Posterior vena cava (tissue), 2 donors: ENCODE measurements at regions of chr10 and their contacts with region 1.

Region 1: GRCh38 chr10:112369495-112370423 is 4.2 kb upstream of the ACSL5 start:
- DNase-seq: no peak

Region 2: DNA sequence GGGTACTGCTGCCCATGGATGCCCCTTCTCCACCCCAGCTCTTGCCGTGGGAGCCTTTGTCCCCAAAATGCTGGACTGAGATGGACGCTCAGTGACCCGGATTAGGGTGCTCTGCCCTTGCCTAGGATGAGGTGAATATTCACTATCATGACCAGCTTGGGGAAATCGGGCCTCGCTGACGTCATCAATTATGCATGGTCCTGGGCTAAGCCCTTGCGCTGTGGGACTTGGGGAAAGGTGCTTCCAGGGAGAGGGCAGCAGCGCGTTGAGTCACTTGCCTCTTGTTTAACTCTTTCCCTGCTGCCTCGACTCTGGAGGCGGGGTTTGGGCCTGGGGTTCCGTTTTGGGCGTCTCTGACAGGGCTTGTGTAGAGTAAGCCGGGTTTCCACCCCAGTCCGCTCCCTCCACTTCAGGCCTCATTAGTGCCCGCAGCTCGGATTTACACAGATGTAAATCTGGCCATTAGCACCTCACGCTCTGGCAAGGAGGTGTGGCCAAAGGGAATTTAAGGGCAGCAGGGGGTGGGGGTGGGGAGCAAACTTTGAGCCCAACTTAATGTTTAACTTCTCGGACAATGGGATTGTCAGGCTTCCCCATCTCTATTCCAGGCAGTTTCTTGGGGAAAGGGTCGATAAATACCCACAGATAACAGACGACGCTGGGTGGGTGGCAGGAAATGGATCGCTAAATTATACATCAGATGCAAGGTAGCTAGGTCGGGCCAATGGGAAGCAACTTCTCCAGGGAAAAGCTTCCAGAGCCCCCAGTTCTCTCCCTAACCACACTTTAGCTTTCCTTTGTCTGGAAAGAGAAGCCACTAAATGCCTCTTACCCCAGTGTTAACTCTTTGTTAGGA is 529.0 kb after region 1 on chr10:
- intact Hi-C with region 1: loop called in 1 of 2 experiments (anchors 5 kb)
- DNase-seq: no peak

Region 3: DNA sequence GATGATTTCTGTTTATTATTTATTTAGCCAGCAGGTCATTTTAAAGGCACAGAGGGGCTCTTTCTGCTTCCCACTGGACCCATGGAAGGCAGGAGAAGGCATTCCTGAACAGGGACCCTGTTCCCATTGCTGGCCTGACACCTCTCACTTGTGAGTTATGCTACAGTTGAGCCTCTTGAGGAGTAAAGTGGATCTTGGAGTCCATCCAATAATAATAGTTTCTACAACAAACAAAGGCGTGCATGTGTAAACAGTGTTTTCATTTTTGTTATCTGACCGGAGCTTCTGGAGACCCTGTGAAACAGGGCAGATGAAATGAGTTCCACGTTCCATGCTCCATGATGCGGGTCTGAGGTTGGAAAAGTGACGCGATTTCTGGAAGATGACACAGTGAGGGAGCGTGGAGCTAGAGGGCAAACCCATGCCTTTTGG is 1055.8 kb after region 1 on chr10:
- intact Hi-C with region 1: no loop called
- DNase-seq: no peak